Mammary epithelial cell (primary cell): ENCODE measurements at regions of chr12 and their contacts with region 1.

Region 1: GRCh38 chr12:6778574-6779550 is 6.5 kb downstream of the LAG3 start:
- DNase-seq: peak; percentile 82
- H3K4me3 ChIP-seq: peak overlapping the region in 2 of 3 experiments; percentile 25 to 31
- H3K27ac ChIP-seq: no peak overlapping the region
- H3K4me1 ChIP-seq: peaks cover 7% of the 10 kb centered on the region
- H3K27me3 ChIP-seq: no peaks in the 10 kb centered on the region
- CTCF ChIP-seq: peak; percentile 81 to 97

Region 2: GRCh38 chr12:5960783-5961182 is 818.1 kb before region 1 on chr12:
- CTCF ChIA-PET with region 1: no interaction called
- dilution Hi-C with region 1: no loop called
- in situ Hi-C with region 1: no loop called
- intact Hi-C with region 1: no loop called
- DNase-seq: no peak
- H3K4me3 ChIP-seq: no peak overlapping the region
- H3K27ac ChIP-seq: no peak overlapping the region
- H3K4me1 ChIP-seq: no peaks in the 10 kb centered on the region
- H3K27me3 ChIP-seq: no peaks in the 10 kb centered on the region
- CTCF ChIP-seq: no peak

Region 3: GRCh38 chr12:6613776-6614512 is 164.9 kb before region 1 on chr12:
- CTCF ChIA-PET with region 1: no interaction called
- dilution Hi-C with region 1: no loop called
- in situ Hi-C with region 1: no loop called
- intact Hi-C with region 1: loop called (anchors 1 kb)
- DNase-seq: peak; percentile 65
- H3K4me3 ChIP-seq: no peak overlapping the region
- H3K27ac ChIP-seq: no peak overlapping the region
- H3K4me1 ChIP-seq: peaks cover 17% of the 10 kb centered on the region
- H3K27me3 ChIP-seq: no peaks in the 10 kb centered on the region
- CTCF ChIP-seq: no peak

Region 4: GRCh38 chr12:6697584-6698351 is 81.1 kb before region 1 on chr12:
- CTCF ChIA-PET with region 1: no interaction called
- dilution Hi-C with region 1: loop called (anchors 5 kb)
- in situ Hi-C with region 1: no loop called
- intact Hi-C with region 1: loop called (anchors 1 kb)
- DNase-seq: peak; percentile 48
- H3K4me3 ChIP-seq: no peak overlapping the region
- H3K27ac ChIP-seq: no peak overlapping the region
- H3K4me1 ChIP-seq: peaks cover 4% of the 10 kb centered on the region
- H3K27me3 ChIP-seq: peaks cover 21% of the 10 kb centered on the region
- CTCF ChIP-seq: peak; percentile 55 to 57

Region 5: GRCh38 chr12:6735448-6736191 is 43.2 kb before region 1 on chr12:
- CTCF ChIA-PET with region 1: no interaction called
- dilution Hi-C with region 1: no loop called
- in situ Hi-C with region 1: no loop called
- intact Hi-C with region 1: loop called (anchors 1 kb)
- DNase-seq: peak; percentile 97
- H3K4me3 ChIP-seq: no peak overlapping the region
- H3K27ac ChIP-seq: peak overlapping the region; percentile 7
- H3K4me1 ChIP-seq: peaks cover 13% of the 10 kb centered on the region
- H3K27me3 ChIP-seq: no peaks in the 10 kb centered on the region
- CTCF ChIP-seq: peak; percentile 76 to 81